ENCODE measurements at regions of chr4 and their contacts with region 1.

Region 1: DNA sequence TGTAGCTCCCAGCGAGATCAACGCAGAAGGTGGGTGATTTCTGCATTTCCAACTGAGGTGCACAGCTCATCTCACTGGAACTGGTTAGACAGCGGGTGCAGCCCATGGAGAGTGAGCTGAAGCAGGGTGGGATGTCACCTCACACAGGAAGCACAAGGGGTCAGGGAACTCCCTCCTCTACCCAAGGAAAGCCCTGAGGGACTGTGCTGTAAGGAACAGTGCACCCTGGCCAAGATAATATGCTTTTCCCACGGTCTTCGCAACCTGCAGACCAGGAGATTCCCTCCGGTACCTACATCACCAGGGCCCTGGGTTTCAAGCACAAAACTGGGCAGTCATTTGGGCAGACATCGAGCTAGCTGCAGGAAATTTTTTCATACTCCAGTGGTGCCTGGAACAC is 216.4 kb upstream of the TET2 start:
- DNase-seq: no peak
- CTCF ChIP-seq: no peak

Region 2: DNA sequence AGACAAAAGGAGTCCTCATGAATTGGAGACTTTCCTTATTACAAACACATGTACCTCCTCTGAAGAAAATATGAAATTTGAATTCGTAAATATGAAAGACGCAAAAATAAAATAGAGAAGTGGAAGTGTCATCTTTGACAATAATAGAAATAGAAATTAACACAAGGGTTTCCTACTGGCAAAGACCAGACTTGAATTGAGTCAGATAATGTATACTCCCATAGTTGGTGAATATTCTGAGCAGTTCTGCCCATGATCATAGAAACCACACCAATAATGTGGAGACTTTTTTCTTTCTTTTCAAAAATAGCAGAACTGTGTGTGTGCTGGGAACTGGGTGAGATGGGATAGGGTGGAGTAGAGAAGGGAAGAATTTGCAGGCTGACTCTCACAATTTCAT is 61.3 kb before region 1 on chr4:
- CTCF ChIA-PET with region 1: no interaction called
- POLR2A ChIA-PET with region 1: no interaction called
- DNase-seq: peak; percentile 31
- CTCF ChIP-seq: no peak

Region 3: DNA sequence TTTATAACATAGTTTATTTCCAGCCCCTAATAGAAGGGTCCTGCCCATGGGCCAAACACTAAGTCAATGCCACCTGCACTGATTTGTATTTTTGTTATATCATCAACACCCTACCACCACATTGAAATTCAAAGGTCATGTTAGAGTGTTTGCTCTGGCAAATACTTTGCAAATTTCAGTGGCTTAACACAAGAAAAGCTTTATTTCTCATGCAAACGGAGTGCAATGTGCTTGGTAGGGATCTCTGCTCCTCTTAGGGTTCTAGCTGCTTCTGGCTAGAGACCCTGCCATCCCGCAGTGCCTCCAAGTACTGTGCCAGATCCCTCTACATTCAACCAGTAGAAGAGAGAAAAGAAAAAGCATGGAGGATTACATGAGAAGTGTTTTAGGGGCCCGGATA is 14.4 kb before region 1 on chr4:
- CTCF ChIA-PET with region 1: interaction called, 15 read pairs
- POLR2A ChIA-PET with region 1: no interaction called
- DNase-seq: no peak
- CTCF ChIP-seq: no peak